ENCODE measurements at regions of chr20 and their contacts with region 1.

Region 1: DNA sequence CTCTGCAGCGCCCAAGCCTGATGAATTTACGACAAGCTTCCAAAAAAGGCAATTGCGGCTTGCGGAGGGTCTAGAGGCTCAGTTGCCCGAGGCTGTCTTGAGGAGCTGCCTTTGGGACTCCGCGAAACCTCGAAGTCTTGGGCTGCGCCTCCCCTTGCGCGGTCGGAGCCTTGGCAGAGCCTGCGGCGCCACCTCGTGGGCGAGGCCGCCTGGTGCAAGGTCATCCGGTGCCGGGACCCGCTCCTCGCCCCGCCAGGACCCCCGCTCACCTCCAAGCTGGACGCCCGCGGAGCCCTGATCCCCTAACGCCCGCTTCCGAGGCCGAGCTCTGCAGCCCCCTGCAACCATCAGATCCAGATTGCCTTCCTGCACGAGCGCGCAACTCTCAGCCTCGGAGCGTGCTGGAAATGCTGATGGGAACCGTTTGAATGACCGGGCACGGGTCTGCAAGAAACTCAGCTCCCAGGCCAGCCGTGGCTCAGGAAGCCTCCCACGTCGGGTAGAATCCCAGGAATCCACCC is 14.9 kb upstream of the FAM210B start:
- DNase-seq: peak; percentile 76 to 83 (median 82)
- ATAC-seq: peak; percentile 100
- H3K4me3 ChIP-seq: no peak overlapping the region
- H3K27ac ChIP-seq: no peak overlapping the region
- H3K4me1 ChIP-seq: peaks cover 0 to 6% of the 10 kb centered on the region in 2 experiments; a peak in 2 of 5 replicates
- H3K27me3 ChIP-seq: peaks cover 3 to 20% of the 10 kb centered on the region in 2 experiments; a peak in 2 of 5 replicates
- CTCF ChIP-seq: peak; percentile 84 to 88 (median 85)
- EP300 ChIP-seq: no peak
- POLR2A ChIP-seq: no peak
- RAD21 ChIP-seq: peak; percentile 72 to 90

Region 2: DNA sequence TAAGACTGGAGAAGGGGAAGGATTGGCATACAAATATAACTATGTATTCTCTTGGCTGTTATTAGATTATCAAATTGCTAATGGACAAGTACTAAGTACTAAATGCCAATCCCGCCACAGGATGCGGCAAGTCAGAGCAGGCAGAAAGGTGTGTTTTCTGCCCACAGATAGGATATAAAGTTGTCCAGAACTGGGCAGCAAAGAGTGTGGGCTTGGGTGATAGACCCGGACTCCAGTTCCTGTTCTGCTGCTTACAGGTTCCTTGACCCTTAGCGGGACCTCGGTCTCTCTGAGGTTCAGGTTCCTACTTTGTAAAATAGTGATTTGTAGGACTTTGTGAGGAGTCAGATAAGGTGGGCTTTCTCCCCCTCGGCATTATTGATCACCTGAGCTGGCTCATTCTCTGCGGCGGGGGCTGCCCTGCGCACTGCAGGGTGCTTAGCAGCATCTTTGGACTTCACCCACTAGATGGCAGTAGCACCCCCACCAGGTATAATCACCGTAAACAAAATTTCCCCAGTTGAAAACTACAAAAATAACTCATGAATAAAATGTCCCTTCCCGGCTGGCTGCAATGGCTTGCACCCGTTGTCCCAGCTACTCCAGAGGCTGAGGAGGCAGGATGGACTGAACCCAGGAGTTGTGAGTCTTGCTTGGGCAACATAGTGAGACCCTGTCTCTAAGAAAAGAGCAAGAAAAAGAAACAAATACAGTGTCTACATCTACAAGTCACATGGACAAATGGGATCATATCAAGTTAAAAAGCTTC is 1675.5 kb before region 1 on chr20:
- CTCF ChIA-PET with region 1: no interaction called
- POLR2A ChIA-PET with region 1: no interaction called
- in situ Hi-C with region 1: no loop called
- intact Hi-C with region 1: loop called (anchors 5 kb)
- DNase-seq: peak; percentile 23 to 44 (median 30)
- ATAC-seq: peak; percentile 91
- H3K4me3 ChIP-seq: no peak overlapping the region
- H3K27ac ChIP-seq: no peak overlapping the region
- H3K4me1 ChIP-seq: no peaks in the 10 kb centered on the region
- H3K27me3 ChIP-seq: no peaks in the 10 kb centered on the region
- CTCF ChIP-seq: peak; percentile 54 to 65 (median 60)
- EP300 ChIP-seq: no peak
- POLR2A ChIP-seq: no peak
- RAD21 ChIP-seq: peak in 1 of 2 experiments; percentile 43; a peak in 2 of 4 replicates

Region 3: GRCh38 chr20:56187534-56188198 is 156.3 kb before region 1 on chr20:
- CTCF ChIA-PET with region 1: no interaction called
- POLR2A ChIA-PET with region 1: no interaction called
- in situ Hi-C with region 1: no loop called
- intact Hi-C with region 1: loop called (anchors 5 kb)
- DNase-seq: peak in 1 of 4 experiments; percentile 6
- ATAC-seq: no peak
- H3K4me3 ChIP-seq: no peak overlapping the region
- H3K27ac ChIP-seq: no peak overlapping the region
- H3K4me1 ChIP-seq: no peaks in the 10 kb centered on the region
- H3K27me3 ChIP-seq: no peaks in the 10 kb centered on the region
- CTCF ChIP-seq: 0 out of 6 replicates have a peak, but pooled peaks of 1 of the 3 experiments have one; percentile 17
- EP300 ChIP-seq: no peak
- POLR2A ChIP-seq: no peak
- RAD21 ChIP-seq: peak; percentile 8 to 23; a peak in 1 of 4 replicates

Region 4: GRCh38 chr20:56257604-56258003 is 86.3 kb before region 1 on chr20:
- CTCF ChIA-PET with region 1: no interaction called
- POLR2A ChIA-PET with region 1: no interaction called
- in situ Hi-C with region 1: loop called (anchors 10 kb)
- intact Hi-C with region 1: no loop called
- DNase-seq: no peak
- ATAC-seq: no peak
- H3K4me3 ChIP-seq: no peak overlapping the region
- H3K27ac ChIP-seq: no peak overlapping the region
- H3K4me1 ChIP-seq: no peaks in the 10 kb centered on the region
- H3K27me3 ChIP-seq: no peaks in the 10 kb centered on the region
- CTCF ChIP-seq: no peak
- EP300 ChIP-seq: no peak
- POLR2A ChIP-seq: no peak
- RAD21 ChIP-seq: no peak

Measured in K562 (cell line).